Lower lobe of right lung (tissue), 2 donors: ENCODE measurements at regions of chr11 and their contacts with region 1.

Region 1: GRCh38 chr11:107573438-107573837 is 7.9 kb upstream of the ALKBH8 start:
- DNase-seq: no peak
- ATAC-seq: no peak
- H3K4me3 ChIP-seq: no peak overlapping the region
- H3K27ac ChIP-seq: no peak overlapping the region
- H3K4me1 ChIP-seq: no peaks in the 10 kb centered on the region
- H3K27me3 ChIP-seq: no peaks in the 10 kb centered on the region
- CTCF ChIP-seq: no peak

Region 2: GRCh38 chr11:107689317-107690202 is 116.1 kb after region 1 on chr11:
- intact Hi-C with region 1: loop called (anchors 5 kb)
- DNase-seq: peak; percentile 76
- ATAC-seq: peak; percentile 99
- H3K4me3 ChIP-seq: no peak overlapping the region
- H3K27ac ChIP-seq: no peak overlapping the region
- H3K4me1 ChIP-seq: peaks cover 13% of the 10 kb centered on the region
- H3K27me3 ChIP-seq: no peaks in the 10 kb centered on the region
- CTCF ChIP-seq: peak; percentile 65

Region 3: DNA sequence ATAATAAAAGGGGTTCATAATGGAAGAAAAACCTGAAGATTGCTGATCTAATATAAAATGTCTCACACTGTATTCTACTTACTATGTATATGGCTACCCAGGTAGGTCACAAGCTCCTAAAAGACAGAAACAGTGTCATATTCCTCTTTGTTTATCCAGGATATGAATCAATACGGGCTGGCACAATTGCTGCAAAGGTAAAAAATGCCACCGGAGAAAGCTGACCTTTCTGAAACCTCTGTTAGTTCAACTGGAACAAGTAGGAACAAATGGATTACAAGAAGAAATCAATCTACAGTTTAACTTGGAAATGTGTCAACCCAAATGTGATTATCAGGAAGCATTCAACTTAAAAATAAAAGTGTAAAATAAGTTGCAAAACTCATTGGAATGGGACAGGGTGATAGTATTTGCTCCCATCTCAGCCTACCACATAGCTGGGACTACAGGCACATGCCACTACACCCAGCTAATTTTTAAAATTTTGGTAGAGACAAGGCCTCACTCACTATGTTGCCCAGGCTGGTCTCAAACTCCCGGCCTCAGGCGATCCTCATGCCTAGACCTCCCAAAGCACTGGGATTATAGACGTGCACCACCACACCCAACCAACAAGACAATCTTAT is 257.6 kb after region 1 on chr11:
- intact Hi-C with region 1: no loop called
- DNase-seq: no peak
- ATAC-seq: no peak
- H3K4me3 ChIP-seq: no peak overlapping the region
- H3K27ac ChIP-seq: no peak overlapping the region
- H3K4me1 ChIP-seq: no peaks in the 10 kb centered on the region
- H3K27me3 ChIP-seq: no peaks in the 10 kb centered on the region
- CTCF ChIP-seq: no peak